CD8-positive, alpha-beta T cell (primary cell): ENCODE measurements at regions of chr18 and their contacts with region 1.

Region 1: DNA sequence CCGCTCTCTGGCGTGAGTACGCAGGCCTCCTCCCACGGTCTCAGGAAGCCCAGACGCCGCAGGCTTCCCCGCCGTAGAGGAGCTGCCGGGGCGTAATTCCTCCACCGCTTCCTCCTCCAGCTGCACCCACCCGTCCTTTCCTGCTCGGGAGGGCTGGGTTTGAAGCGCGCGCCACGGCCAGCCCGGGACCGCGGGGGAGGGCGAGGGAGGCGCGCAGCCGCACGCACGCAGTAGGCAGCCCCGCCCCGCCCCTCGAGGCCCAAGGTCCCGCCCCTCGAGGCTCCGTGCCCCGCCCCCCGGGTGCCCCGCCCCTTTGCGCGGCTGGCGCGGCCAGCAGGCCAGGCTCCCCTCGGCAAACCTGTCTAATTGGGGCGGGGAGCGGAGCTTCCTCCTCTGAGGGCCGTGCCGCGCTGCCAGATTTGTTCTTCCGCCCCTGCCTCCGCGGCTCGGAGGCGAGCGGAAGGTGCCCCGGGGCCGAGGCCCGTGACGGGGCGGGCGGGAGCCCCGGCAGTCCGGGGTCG is at the start of gene MALT1:
- DNase-seq: peak; percentile 91 to 99 (median 95)
- ATAC-seq: peak; percentile 90
- H3K4me3 ChIP-seq: peak within 1 kb of the TSS; percentile 81 to 83
- H3K4me3 Mint-ChIP-seq: peak within 1 kb of the TSS; percentile 96
- H3K27ac ChIP-seq: peak within 1 kb of the TSS; percentile 67 to 84
- H3K27ac Mint-ChIP-seq: peak within 1 kb of the TSS; percentile 95
- H3K4me1 ChIP-seq: peaks cover 46% of the 10 kb centered on the region
- H3K4me1 Mint-ChIP-seq: peaks cover 48% of the 10 kb centered on the region
- H3K27me3 ChIP-seq: no peaks in the 10 kb centered on the region
- H3K27me3 Mint-ChIP-seq: no peaks in the 10 kb centered on the region
- CTCF ChIP-seq: no peak
- total RNA-seq, gene MALT1: 67.9 to 69.9 TPM

Region 2: GRCh38 chr18:58529714-58530354 is 141.3 kb before region 1 on chr18:
- CTCF ChIA-PET with region 1: interaction called, 6 read pairs
- POLR2A ChIA-PET with region 1: interaction called, 3 read pairs
- intact Hi-C with region 1: loop called in 1 of 2 experiments (anchors 1 kb)
- DNase-seq: peak; percentile 40 to 82 (median 72)
- ATAC-seq: peak; percentile 95
- H3K4me3 ChIP-seq: no peak overlapping the region
- H3K4me3 Mint-ChIP-seq: no peak overlapping the region
- H3K27ac ChIP-seq: no peak overlapping the region
- H3K27ac Mint-ChIP-seq: no peak overlapping the region
- H3K4me1 ChIP-seq: no peaks in the 10 kb centered on the region
- H3K4me1 Mint-ChIP-seq: peaks cover 4% of the 10 kb centered on the region
- H3K27me3 ChIP-seq: no peaks in the 10 kb centered on the region
- H3K27me3 Mint-ChIP-seq: peaks cover 7% of the 10 kb centered on the region
- CTCF ChIP-seq: peak; percentile 95

Region 3: GRCh38 chr18:58625839-58626238 is 45.3 kb before region 1 on chr18:
- CTCF ChIA-PET with region 1: interaction called, 3 read pairs
- POLR2A ChIA-PET with region 1: interaction called, 4 read pairs
- intact Hi-C with region 1: loop called in 1 of 2 experiments (anchors 5 kb)
- DNase-seq: no peak
- ATAC-seq: no peak
- H3K4me3 ChIP-seq: no peak overlapping the region
- H3K4me3 Mint-ChIP-seq: no peak overlapping the region
- H3K27ac ChIP-seq: no peak overlapping the region
- H3K27ac Mint-ChIP-seq: no peak overlapping the region
- H3K4me1 ChIP-seq: peaks cover 21% of the 10 kb centered on the region
- H3K4me1 Mint-ChIP-seq: peaks cover 24% of the 10 kb centered on the region
- H3K27me3 ChIP-seq: no peaks in the 10 kb centered on the region
- H3K27me3 Mint-ChIP-seq: no peaks in the 10 kb centered on the region
- CTCF ChIP-seq: no peak

Region 4: GRCh38 chr18:58697146-58697545 is 26.0 kb after region 1 on chr18:
- CTCF ChIA-PET with region 1: interaction called, 3 read pairs
- POLR2A ChIA-PET with region 1: interaction called, 89 read pairs
- intact Hi-C with region 1: no loop called
- DNase-seq: no peak
- ATAC-seq: no peak
- H3K4me3 ChIP-seq: no peak overlapping the region
- H3K4me3 Mint-ChIP-seq: peak overlapping the region; percentile 33
- H3K27ac ChIP-seq: no peak overlapping the region
- H3K27ac Mint-ChIP-seq: peak overlapping the region; percentile 16
- H3K4me1 ChIP-seq: peaks cover 37% of the 10 kb centered on the region
- H3K4me1 Mint-ChIP-seq: peaks cover 58% of the 10 kb centered on the region
- H3K27me3 ChIP-seq: no peaks in the 10 kb centered on the region
- H3K27me3 Mint-ChIP-seq: no peaks in the 10 kb centered on the region
- CTCF ChIP-seq: no peak

Region 5: GRCh38 chr18:58754544-58755068 is 83.4 kb after region 1 on chr18:
- CTCF ChIA-PET with region 1: interaction called, 3 read pairs
- POLR2A ChIA-PET with region 1: interaction called, 10 read pairs
- intact Hi-C with region 1: loop called in 1 of 2 experiments (anchors 5 kb)
- DNase-seq: peak in 1 of 9 experiments; percentile 40
- ATAC-seq: peak; percentile 32
- H3K4me3 ChIP-seq: no peak overlapping the region
- H3K4me3 Mint-ChIP-seq: no peak overlapping the region
- H3K27ac ChIP-seq: no peak overlapping the region
- H3K27ac Mint-ChIP-seq: peak overlapping the region; percentile 16
- H3K4me1 ChIP-seq: peaks cover 19% of the 10 kb centered on the region
- H3K4me1 Mint-ChIP-seq: peaks cover 33% of the 10 kb centered on the region
- H3K27me3 ChIP-seq: no peaks in the 10 kb centered on the region
- H3K27me3 Mint-ChIP-seq: no peaks in the 10 kb centered on the region
- CTCF ChIP-seq: no peak

Region 6: GRCh38 chr18:59139371-59140298 is 468.5 kb after region 1 on chr18 and contains the start of gene SEC11C:
- CTCF ChIA-PET with region 1: no interaction called
- POLR2A ChIA-PET with region 1: interaction called, 3 read pairs
- intact Hi-C with region 1: loop called in 1 of 2 experiments (anchors 5 kb)
- DNase-seq: peak; percentile 91 to 98 (median 96)
- ATAC-seq: peak; percentile 90
- H3K4me3 ChIP-seq: peak within 1 kb of the TSS; percentile 92 to 99
- H3K4me3 Mint-ChIP-seq: peak within 1 kb of the TSS; percentile 94
- H3K27ac ChIP-seq: peak within 1 kb of the TSS; percentile 98 to 100
- H3K27ac Mint-ChIP-seq: peak within 1 kb of the TSS; percentile 100
- H3K4me1 ChIP-seq: peaks cover 19% of the 10 kb centered on the region
- H3K4me1 Mint-ChIP-seq: peaks cover 42% of the 10 kb centered on the region
- H3K27me3 ChIP-seq: no peaks in the 10 kb centered on the region
- H3K27me3 Mint-ChIP-seq: peaks cover 9% of the 10 kb centered on the region
- CTCF ChIP-seq: no peak
- total RNA-seq, gene SEC11C: 33.8 to 38.5 TPM